GM12878 (cell line): ENCODE measurements at regions of chr14 and their contacts with region 1.

Region 1: GRCh38 chr14:52895000-52895399 is 55.9 kb downstream of the FERMT2 start:
- DNase-seq: no peak
- ATAC-seq: peak; percentile 89
- H3K4me3 ChIP-seq: no peak overlapping the region
- H3K27ac ChIP-seq: no peak overlapping the region
- H3K4me1 ChIP-seq: no peaks in the 10 kb centered on the region
- H3K27me3 ChIP-seq: no peaks in the 10 kb centered on the region
- CTCF ChIP-seq: no peak
- EP300 ChIP-seq: no peak
- POLR2A ChIP-seq: no peak
- RAD21 ChIP-seq: no peak

Region 2: GRCh38 chr14:52944254-52944653 is 49.3 kb after region 1 on chr14:
- CTCF ChIA-PET with region 1: no interaction called
- POLR2A ChIA-PET with region 1: no interaction called
- RAD21 ChIA-PET with region 1: no interaction called
- SMC1A ChIA-PET with region 1: interaction called, 3 read pairs
- in situ Hi-C with region 1: no loop called
- intact Hi-C with region 1: loop called (anchors 5 kb)
- DNase-seq: no peak
- ATAC-seq: no peak
- H3K4me3 ChIP-seq: no peak overlapping the region
- H3K27ac ChIP-seq: no peak overlapping the region
- H3K4me1 ChIP-seq: no peaks in the 10 kb centered on the region
- H3K27me3 ChIP-seq: peaks cover 0 to 5% of the 10 kb centered on the region in 2 experiments; a peak in 2 of 4 replicates
- CTCF ChIP-seq: no peak
- EP300 ChIP-seq: no peak
- POLR2A ChIP-seq: no peak
- RAD21 ChIP-seq: no peak